ENCODE measurements at regions of chr2 and their contacts with region 1.

Region 1: DNA sequence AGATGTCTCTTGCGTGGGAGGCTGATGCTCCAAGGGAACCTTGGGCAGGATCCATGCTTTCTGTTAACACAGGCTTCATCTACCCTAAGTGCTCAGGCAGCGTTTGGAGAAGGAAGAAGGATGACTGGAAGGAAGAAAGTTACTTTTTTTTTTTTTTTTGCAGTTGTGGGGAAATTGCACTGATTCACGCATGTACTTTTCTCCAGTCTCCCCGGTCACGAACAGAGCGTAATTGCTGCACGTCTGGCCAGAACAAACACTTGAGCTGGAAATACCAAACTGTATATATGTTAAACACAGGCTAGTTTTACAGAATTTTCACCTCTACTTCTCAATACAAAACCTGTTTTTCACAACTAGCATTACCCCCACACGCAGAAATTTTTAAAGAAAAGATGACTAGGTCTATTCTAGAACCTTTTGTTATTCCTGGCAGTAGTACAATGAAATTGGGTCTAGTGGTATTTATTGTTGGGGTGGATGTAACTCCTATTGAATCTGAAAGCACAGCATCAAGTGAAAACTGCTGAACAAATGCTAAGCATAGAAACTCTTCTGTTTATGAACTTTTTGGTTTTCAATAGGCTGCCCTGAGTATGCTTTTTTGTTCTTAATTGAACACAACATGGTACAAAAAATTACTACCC is 9.3 kb upstream of the SCYGR5 start:
- H3K4me3 ChIP-seq: no peak overlapping the region
- H3K27ac ChIP-seq: no peak overlapping the region
- H3K4me1 ChIP-seq: no peaks in the 10 kb centered on the region
- CTCF ChIP-seq: no peak

Region 2: DNA sequence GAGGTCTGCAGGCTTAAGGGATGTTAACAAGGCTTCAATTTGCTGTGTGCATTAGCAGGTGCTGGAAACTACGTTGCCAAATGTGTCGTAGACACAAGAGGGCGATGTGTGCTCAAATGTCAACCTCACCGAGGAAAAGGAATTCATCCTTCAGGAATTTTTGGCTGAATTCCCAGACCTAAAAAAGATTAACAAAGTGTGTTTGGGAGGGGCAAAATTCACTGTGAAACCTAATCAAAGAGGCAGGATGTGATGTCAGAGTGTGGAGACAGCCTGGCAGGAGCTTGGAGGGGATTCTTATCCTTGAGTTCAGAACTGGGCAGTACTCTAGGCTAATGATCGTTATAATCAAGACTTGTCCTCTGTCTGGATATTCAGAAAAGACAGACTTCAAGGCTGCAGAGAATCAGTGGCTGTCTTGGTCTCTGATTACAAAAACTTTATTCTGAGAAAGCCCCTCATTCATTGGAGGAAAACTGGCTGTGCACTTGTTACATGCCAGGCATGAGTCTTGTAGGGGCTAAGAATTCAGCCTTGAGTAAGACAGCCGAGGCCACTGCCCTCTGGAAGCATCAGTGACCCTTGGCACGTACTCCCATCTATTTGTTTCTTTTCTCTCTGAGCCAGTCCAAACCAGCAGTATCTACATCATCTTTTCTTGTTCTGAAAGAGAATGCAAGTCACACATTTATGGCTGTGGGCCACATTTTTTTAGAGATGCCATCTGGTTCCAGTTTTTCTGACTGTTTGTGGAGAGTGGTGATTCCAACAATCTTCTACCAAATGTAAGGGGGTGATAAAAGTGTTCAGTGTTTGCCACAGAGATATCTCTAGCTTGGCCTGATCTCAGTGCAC is 250.9 kb before region 1 on chr2:
- CTCF ChIA-PET with region 1: interaction called, 10 read pairs
- POLR2A ChIA-PET with region 1: no interaction called
- H3K4me3 ChIP-seq: no peak overlapping the region
- H3K27ac ChIP-seq: 0 out of 2 replicates have a peak overlapping the region, but pooled peaks have one; percentile 6
- H3K4me1 ChIP-seq: no peaks in the 10 kb centered on the region
- CTCF ChIP-seq: peak; percentile 83

Region 3: DNA sequence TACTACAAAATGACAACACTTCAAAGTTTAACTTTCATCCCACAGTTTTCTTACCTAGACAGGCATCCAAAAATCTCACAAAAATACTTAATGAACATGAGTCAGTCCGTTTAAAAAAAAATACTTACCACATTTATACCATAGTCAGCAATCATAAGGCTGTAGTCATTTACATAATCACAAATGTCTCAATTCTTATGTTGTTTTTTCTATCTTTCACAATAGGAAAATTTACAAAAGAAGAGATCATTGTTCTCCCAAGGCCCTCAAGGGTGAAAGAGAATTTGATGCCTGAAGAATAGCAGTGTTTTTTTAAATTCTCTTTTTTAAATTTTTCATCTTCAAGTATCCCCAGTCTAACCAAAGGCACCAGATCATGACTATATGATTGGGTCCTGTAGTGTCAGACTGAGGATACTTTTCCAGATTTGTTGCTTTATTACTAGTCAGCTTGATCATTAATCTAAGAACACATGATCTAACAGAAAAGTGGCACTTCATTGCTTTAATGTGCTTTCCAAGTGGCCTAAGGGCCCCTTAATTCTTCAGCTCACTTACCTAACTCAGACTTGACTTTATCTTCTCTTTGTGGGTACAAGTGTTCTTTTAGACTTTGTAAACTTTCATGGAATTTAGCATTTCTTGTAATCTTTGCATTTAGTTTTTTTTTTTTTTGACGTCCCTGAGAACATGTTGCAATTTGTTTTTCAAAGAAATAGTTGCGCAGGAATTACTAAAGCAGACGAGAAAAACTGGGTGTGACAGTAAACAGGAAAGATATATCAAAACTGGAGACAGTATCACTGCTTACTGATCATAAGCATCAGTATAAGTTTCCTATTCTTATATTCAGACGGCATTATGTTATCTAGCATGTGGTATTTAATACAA is 14.1 kb after region 1 on chr2:
- CTCF ChIA-PET with region 1: interaction called, 10 read pairs
- POLR2A ChIA-PET with region 1: no interaction called
- H3K4me3 ChIP-seq: no peak overlapping the region
- H3K27ac ChIP-seq: no peak overlapping the region
- H3K4me1 ChIP-seq: no peaks in the 10 kb centered on the region
- CTCF ChIP-seq: no peak

Region 4: DNA sequence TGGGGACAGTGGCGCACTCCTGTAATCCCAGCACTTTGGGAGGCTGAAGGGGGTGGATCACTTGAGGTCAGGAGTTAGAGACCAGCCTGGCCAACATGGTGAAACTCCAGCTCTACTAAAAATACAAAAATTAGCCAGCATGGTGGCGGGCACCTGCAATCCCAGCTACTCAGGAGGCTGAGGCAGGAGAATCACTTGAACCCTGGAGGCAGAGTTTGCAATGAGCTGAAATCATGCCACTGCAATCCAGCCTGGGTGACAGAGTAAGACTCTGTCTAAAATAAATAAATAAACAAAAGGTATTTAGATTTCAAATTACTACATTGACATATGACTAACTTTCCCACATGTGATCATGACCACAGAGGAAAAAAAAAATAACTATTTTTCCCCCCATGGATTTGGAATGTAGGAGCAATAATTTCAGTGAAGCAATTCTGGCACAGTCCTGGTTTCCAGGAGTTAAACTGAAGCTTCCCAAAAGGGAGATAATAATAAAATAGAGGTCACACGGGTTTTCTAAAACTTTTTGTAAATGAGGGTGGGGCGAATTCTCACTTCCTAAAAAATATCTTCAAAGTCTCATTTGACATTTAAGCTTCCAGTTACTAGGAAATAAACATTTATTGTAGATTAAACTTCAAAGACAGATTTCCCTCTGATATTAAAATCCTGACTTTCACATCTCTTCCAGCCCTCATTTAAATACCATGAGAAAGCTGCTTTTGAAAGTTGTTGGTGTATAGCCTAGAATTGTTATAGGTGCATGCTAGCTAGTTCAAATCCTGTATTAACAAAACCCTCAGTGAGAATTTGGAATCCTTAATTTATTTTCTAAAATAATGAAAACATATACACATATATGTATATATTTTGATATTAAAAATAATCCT is 39.7 kb after region 1 on chr2:
- CTCF ChIA-PET with region 1: interaction called, 11 read pairs
- POLR2A ChIA-PET with region 1: no interaction called
- H3K4me3 ChIP-seq: no peak overlapping the region
- H3K27ac ChIP-seq: no peak overlapping the region
- H3K4me1 ChIP-seq: 0 out of 2 replicates have a peak, but pooled peaks cover 2% of the 10 kb centered on the region
- CTCF ChIP-seq: no peak

Region 5: DNA sequence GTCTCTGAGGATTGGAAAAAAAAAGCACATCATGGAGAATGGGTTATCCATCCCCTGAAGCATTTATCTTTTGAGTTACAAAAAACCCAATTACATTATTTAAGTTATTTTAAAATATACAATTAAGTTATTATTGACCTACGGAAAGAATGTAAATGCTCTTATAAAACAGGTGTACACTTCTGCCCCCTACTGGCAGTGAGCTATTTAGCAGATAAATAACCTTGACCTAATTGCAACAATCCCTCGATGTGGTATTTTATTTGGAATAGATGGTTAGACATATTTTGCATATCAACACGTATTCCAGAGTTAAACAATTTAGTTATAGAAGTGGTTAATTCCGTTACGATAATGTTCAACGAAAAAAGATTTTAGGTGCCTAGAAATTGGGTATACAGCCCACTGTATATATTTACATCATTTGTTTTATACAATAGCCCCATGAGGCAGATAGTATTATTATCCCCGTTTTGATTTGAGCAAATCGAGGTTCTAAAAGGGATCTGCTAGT is 205.0 kb after region 1 on chr2:
- CTCF ChIA-PET with region 1: interaction called, 22 read pairs
- POLR2A ChIA-PET with region 1: no interaction called
- H3K4me3 ChIP-seq: no peak overlapping the region
- H3K27ac ChIP-seq: no peak overlapping the region
- H3K4me1 ChIP-seq: no peaks in the 10 kb centered on the region
- CTCF ChIP-seq: no peak

Measured in HEK293 (cell line).